ENCODE measurements at regions of chr2 and their contacts with region 1.

Region 1: DNA sequence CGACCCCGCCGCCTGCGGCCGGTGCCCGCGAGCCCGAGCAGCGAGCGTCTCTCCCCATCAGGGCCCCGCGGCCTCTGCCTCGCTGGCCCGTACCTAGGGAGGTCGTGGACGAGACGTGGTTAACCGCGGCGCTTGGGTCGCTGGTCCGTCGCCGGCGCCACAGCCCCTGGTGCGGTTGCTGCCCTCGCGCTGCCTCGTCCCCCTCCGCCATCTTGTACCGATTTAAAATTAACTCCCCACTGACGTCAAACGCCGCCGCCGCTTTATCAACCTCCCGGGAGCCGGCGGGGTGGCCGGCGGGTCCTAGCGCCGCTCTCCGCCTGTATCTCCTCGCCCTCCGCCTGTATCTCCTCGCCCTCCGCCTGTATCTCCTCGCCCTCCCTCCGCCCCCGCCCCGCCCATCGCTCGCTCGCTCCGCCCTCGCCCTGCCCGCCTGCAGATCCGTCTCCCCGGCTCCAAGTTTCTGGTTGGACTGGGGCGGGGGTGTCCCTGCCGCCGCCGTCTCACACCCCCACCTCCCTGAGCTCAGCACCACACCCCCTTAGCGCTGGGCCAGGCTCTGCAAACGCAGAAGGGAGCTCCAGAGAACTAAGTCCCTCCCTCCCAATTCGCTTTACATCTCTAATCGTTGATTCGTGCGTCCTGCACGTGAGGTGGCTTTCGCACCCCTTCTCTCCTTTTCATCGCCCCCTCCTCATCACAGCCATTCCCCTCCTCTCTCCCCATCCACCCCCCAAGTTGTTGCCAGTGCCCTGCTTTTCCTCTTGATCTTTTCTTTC is at the start of gene ATL2:
- DNase-seq: peak; percentile 59
- ATAC-seq: peak; percentile 86
- H3K4me3 ChIP-seq: peak within 1 kb of the TSS; percentile 90
- H3K27ac ChIP-seq: peak within 1 kb of the TSS; percentile 92
- H3K4me1 ChIP-seq: no peaks in the 10 kb centered on the region
- H3K27me3 ChIP-seq: no peaks in the 10 kb centered on the region
- CTCF ChIP-seq: no peak
- EP300 ChIP-seq: no peak; a peak in 1 of 4 replicates
- POLR2A ChIP-seq: peak; percentile 86
- RAD21 ChIP-seq: no peak
- polyA plus RNA-seq, gene ATL2: 8.6 to 12.6 TPM

Region 2: GRCh38 chr2:38076606-38077430 is 300.4 kb before region 1 on chr2:
- CTCF ChIA-PET with region 1: no interaction called
- POLR2A ChIA-PET with region 1: no interaction called
- RAD21 ChIA-PET with region 1: no interaction called
- SMC1A ChIA-PET with region 1: no interaction called
- in situ Hi-C with region 1: no loop called
- intact Hi-C with region 1: no loop called
- DNase-seq: no peak
- ATAC-seq: peak; percentile 79
- H3K4me3 ChIP-seq: peak overlapping the region; percentile 71
- H3K27ac ChIP-seq: peak overlapping the region; percentile 77
- H3K4me1 ChIP-seq: peaks cover 11% of the 10 kb centered on the region
- H3K27me3 ChIP-seq: no peaks in the 10 kb centered on the region; a peak in 2 of 4 replicates
- CTCF ChIP-seq: peak; percentile 12 to 37 (median 34); a peak in 4 of 6 replicates
- EP300 ChIP-seq: peak; percentile 94 to 97
- POLR2A ChIP-seq: peak; percentile 63
- RAD21 ChIP-seq: peak; percentile 46; the same call in 1 of the 2 replicates

Region 3: DNA sequence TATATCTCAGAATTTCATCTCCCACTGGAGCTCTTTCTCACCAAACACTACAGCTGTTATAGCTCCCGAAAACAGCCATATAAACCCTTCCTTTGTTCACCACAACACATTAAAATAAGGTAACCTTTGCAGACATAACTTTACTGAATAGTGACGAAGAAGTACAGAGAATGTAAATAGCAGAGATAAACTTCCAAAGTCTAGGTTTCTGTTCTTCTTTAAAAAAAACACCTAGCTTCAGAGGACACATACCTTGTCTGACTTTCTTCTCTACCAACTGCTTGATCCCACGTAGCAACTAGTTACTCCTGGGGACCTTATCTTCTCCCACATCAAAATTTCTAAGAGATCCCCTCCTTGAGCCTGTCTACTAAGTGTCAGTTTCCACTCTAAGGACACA is 32.4 kb before region 1 on chr2:
- CTCF ChIA-PET with region 1: interaction called, 10 read pairs
- POLR2A ChIA-PET with region 1: interaction called, 3 read pairs
- RAD21 ChIA-PET with region 1: interaction called, 3 read pairs
- SMC1A ChIA-PET with region 1: interaction called, 5 read pairs
- in situ Hi-C with region 1: no loop called
- intact Hi-C with region 1: no loop called
- DNase-seq: no peak
- ATAC-seq: peak; percentile 51
- H3K4me3 ChIP-seq: no peak overlapping the region
- H3K27ac ChIP-seq: no peak overlapping the region; the same call in 1 of the 2 replicates
- H3K4me1 ChIP-seq: peaks cover 6% of the 10 kb centered on the region; the same call in 1 of the 2 replicates
- H3K27me3 ChIP-seq: no peaks in the 10 kb centered on the region
- CTCF ChIP-seq: no peak
- EP300 ChIP-seq: no peak
- POLR2A ChIP-seq: no peak
- RAD21 ChIP-seq: no peak

Region 4: DNA sequence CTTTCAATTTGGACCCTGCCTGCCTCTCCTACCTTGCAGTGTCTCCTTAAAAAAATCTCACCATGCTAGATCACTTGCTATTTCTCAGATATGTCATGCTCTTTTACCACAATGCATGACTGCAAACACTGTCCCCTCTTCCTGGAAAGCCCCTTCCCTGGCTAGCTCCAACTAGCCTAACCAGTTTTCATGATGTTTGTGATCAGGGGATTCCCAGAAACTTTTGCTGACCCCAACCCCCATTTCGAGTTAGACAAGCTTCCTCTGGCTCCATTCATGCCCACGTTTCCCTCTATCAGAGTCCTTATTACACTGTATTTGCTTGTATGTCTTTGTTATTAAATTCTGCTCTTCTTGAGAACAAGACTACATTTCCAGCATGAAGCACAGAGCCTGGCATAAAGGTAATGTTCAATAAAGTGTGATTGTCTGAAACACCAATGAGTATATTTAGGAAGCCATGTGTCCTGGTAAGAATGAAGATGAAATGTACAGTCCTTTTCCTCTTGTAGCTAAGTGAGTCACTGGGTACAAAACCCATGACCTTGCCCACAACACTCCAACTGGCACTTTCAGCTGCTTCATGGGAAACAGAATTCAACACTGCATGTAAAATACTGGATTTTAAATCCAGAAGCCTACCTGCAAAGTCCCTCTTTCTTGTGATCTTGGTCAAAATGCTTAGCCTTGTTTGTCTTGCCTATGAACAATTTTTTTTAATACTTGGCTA is 61.8 kb after region 1 on chr2:
- CTCF ChIA-PET with region 1: interaction called, 3 read pairs
- POLR2A ChIA-PET with region 1: interaction called, 5 read pairs
- RAD21 ChIA-PET with region 1: interaction called, 14 read pairs
- SMC1A ChIA-PET with region 1: interaction called, 25 read pairs
- in situ Hi-C with region 1: no loop called
- intact Hi-C with region 1: loop called (anchors 2 kb)
- DNase-seq: peak; percentile 76
- ATAC-seq: peak; percentile 94
- H3K4me3 ChIP-seq: no peak overlapping the region
- H3K27ac ChIP-seq: peak overlapping the region; percentile 84
- H3K4me1 ChIP-seq: peaks cover 16% of the 10 kb centered on the region
- H3K27me3 ChIP-seq: no peaks in the 10 kb centered on the region
- CTCF ChIP-seq: no peak
- EP300 ChIP-seq: peak; percentile 73 to 75; a peak in 3 of 4 replicates
- POLR2A ChIP-seq: no peak
- RAD21 ChIP-seq: no peak; the same call in 1 of the 2 replicates

Region 5: GRCh38 chr2:38535744-38536506 is 158.7 kb after region 1 on chr2:
- CTCF ChIA-PET with region 1: no interaction called
- POLR2A ChIA-PET with region 1: no interaction called
- RAD21 ChIA-PET with region 1: no interaction called
- SMC1A ChIA-PET with region 1: interaction called, 11 read pairs
- in situ Hi-C with region 1: no loop called
- intact Hi-C with region 1: no loop called
- DNase-seq: no peak
- ATAC-seq: peak; percentile 91
- H3K4me3 ChIP-seq: 0 out of 2 replicates have a peak overlapping the region, but pooled peaks have one; percentile 8
- H3K27ac ChIP-seq: no peak overlapping the region
- H3K4me1 ChIP-seq: peaks cover 14% of the 10 kb centered on the region
- H3K27me3 ChIP-seq: no peaks in the 10 kb centered on the region
- CTCF ChIP-seq: peak; percentile 73 to 87 (median 87)
- EP300 ChIP-seq: no peak
- POLR2A ChIP-seq: no peak
- RAD21 ChIP-seq: peak; percentile 75

Measured in GM12878 (cell line).